Sigmoid colon (tissue), 7 donors: ENCODE measurements at regions of chr16 and their contacts with region 1.

Region 1: GRCh38 chr16:84970447-84971127 is 40.7 kb downstream of the ZDHHC7 start:
- DNase-seq: peak; percentile 92
- H3K4me3 ChIP-seq: no peak overlapping the region
- H3K27ac ChIP-seq: peak overlapping the region in 1 of 4 donors; percentile 80
- H3K4me1 ChIP-seq: peaks cover 0 to 45% (median 32%) of the 10 kb centered on the region in 4 donors
- H3K27me3 ChIP-seq: no peaks in the 10 kb centered on the region
- CTCF ChIP-seq: peak; percentile 93 to 99 (median 96)
- EP300 ChIP-seq: no peak
- POLR2A ChIP-seq: no peak

Region 2: GRCh38 chr16:84672276-84673202 is 298.0 kb before region 1 on chr16:
- intact Hi-C with region 1: loop called (anchors 5 kb)
- DNase-seq: peak; percentile 89
- H3K4me3 ChIP-seq: no peak overlapping the region
- H3K27ac ChIP-seq: no peak overlapping the region
- H3K4me1 ChIP-seq: peaks cover 0 to 6% (median under 1%) of the 10 kb centered on the region in 4 donors
- H3K27me3 ChIP-seq: no peaks in the 10 kb centered on the region
- CTCF ChIP-seq: peak; percentile 81 to 89 (median 88)
- EP300 ChIP-seq: no peak
- POLR2A ChIP-seq: no peak

Region 3: GRCh38 chr16:84754353-84754856 is 216.2 kb before region 1 on chr16:
- intact Hi-C with region 1: loop called (anchors 1 kb)
- DNase-seq: peak; percentile 85
- H3K4me3 ChIP-seq: peak overlapping the region in 1 of 4 donors; percentile 9
- H3K27ac ChIP-seq: peak overlapping the region; percentile 6 to 32 (median 14)
- H3K4me1 ChIP-seq: peaks cover 0 to 75% (median 38%) of the 10 kb centered on the region in 4 donors
- H3K27me3 ChIP-seq: no peaks in the 10 kb centered on the region
- CTCF ChIP-seq: peak; percentile 74 to 93 (median 90)
- EP300 ChIP-seq: no peak
- POLR2A ChIP-seq: no peak

Region 4: GRCh38 chr16:84924331-84925091 is 46.1 kb before region 1 on chr16:
- intact Hi-C with region 1: loop called (anchors 1 kb)
- DNase-seq: peak; percentile 71
- H3K4me3 ChIP-seq: no peak overlapping the region
- H3K27ac ChIP-seq: peak overlapping the region in 3 of 4 donors; percentile 3 to 78 (median 48)
- H3K4me1 ChIP-seq: peaks cover 2 to 50% (median 38%) of the 10 kb centered on the region in 4 donors
- H3K27me3 ChIP-seq: no peaks in the 10 kb centered on the region
- CTCF ChIP-seq: no peak
- EP300 ChIP-seq: no peak
- POLR2A ChIP-seq: no peak

Region 5: DNA sequence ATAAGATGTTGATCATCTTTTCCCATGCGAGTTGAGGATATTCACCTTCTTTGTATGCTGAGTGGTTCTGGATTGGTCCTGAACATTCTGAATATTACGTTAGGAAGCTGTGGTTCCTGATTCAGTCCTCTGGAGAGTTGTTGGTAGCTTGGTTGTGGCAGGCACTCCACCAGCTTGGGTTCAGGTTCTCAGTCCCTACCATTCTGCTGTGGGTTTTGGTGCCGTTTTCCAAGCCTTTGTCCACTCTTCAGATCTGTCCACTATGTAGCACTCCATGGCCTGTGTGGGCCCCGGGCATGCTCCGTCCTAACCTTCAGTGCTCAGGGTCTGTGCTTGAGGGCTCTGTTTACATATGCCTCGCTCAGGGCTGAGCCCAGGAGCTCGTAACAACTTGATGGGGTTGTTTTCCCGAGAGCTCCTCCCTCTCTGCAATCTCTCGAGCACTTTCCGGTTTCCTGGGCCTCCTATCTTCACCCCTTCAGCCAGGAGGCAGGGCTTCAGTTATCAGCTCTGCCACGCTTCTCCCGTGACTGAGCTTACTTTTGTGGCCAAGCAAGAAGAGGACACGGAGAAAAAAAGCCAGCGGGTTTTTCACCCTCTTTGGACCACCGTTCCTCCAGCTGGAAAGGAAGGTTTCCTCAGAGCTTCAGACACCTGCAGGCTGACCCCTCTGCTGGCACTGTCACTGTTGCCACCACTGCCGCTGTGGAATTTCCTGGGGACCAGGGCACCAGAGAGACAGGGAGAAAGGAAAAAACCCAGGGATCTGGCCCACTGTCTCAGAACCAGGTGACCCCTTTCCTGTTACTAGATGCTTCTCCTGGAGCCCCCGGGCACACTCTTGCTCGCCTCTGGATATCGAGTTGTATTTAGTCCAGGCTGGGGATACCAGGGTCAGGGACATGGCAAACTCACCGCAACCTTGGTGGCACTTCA is 76.6 kb after region 1 on chr16:
- intact Hi-C with region 1: no loop called
- DNase-seq: no peak
- H3K4me3 ChIP-seq: no peak overlapping the region
- H3K27ac ChIP-seq: peak overlapping the region in 3 of 4 donors; percentile 21 to 68 (median 33)
- H3K4me1 ChIP-seq: peaks cover 0 to 41% (median 24%) of the 10 kb centered on the region in 4 donors
- H3K27me3 ChIP-seq: no peaks in the 10 kb centered on the region
- CTCF ChIP-seq: no peak
- EP300 ChIP-seq: no peak
- POLR2A ChIP-seq: no peak